Heart left ventricle (tissue), 16 donors: ENCODE measurements at regions of chr13 and their contacts with region 1.

Region 1: DNA sequence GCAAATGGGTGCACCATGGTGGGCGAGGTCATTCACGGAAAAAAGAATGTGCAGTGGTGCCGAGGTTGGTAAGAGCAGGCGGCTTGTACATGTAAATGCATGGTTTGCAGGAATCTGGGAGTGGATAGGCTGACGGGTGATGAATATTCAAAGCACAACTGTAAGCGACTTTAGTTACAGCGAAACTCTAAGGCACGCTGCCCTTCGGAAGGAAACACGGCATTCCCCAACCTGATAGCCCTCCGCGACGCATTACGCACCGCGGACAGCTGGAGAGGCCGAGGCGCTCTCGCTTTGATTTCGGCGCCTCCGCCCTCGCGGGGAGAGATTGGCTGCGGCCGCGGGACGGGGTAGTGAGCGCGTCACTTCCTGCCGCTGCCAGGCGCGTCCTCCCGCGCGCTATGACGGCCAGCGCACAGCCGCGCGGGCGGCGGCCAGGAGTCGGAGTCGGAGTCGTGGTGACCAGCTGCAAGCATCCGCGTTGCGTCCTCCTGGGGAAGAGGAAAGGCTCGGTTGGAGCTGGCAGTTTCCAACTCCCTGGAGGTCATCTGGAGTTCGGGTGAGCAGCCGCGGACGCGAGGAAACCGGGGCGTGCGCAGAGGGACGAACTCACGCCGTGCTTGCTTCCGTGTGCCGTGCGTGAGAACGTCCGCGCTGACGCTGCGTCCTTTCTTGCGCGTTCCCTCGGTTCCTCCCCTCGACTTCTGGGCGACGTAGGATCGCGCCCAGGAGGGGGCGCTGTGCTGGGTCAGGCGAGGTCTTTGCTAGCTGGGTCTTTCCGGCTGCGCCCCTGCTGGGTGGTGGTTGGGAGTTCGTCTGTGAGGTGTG is at the start of gene NUDT15:
- DNase-seq: peak; percentile 93 to 96 (median 94)
- ATAC-seq: peak; percentile 97 to 99 (median 99)
- H3K4me3 ChIP-seq: peak within 1 kb of the TSS; percentile 43 to 85 (median 71)
- H3K27ac ChIP-seq: peak within 1 kb of the TSS; percentile 78 to 99 (median 96)
- H3K4me1 ChIP-seq: peaks cover 2 to 22% (median 12%) of the 10 kb centered on the region in 12 donors
- H3K27me3 ChIP-seq: no peaks in the 10 kb centered on the region
- CTCF ChIP-seq: peak; percentile 91 to 100 (median 96)
- POLR2A ChIP-seq: peak; percentile 7 to 79
- total RNA-seq, gene NUDT15: 6.8 to 12.6 (median 10.4) TPM

Region 2: DNA sequence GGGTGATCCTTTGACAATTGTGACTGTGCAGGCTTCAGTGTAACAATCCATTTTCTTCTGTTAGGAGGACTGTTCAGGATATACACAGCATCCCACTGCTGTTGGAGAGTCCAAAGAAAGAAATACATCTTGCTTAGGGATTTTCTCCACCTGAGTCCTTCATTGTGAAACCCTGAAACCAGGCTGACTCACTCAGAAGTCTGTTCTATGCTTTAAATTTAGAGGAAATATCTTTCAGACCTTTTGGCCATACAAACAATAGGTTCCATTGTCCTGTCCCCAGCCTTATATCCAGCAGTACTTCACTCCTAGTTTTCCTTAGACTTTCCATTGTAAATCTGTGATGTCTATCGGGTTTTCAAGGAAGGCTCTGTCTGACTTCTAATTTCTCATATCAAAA is 415.6 kb before region 1 on chr13:
- intact Hi-C with region 1: no loop called
- DNase-seq: no peak
- ATAC-seq: no peak
- H3K4me3 ChIP-seq: no peak overlapping the region
- H3K27ac ChIP-seq: no peak overlapping the region
- H3K4me1 ChIP-seq: no peaks in the 10 kb centered on the region
- H3K27me3 ChIP-seq: no peaks in the 10 kb centered on the region
- CTCF ChIP-seq: no peak
- POLR2A ChIP-seq: no peak

Region 3: DNA sequence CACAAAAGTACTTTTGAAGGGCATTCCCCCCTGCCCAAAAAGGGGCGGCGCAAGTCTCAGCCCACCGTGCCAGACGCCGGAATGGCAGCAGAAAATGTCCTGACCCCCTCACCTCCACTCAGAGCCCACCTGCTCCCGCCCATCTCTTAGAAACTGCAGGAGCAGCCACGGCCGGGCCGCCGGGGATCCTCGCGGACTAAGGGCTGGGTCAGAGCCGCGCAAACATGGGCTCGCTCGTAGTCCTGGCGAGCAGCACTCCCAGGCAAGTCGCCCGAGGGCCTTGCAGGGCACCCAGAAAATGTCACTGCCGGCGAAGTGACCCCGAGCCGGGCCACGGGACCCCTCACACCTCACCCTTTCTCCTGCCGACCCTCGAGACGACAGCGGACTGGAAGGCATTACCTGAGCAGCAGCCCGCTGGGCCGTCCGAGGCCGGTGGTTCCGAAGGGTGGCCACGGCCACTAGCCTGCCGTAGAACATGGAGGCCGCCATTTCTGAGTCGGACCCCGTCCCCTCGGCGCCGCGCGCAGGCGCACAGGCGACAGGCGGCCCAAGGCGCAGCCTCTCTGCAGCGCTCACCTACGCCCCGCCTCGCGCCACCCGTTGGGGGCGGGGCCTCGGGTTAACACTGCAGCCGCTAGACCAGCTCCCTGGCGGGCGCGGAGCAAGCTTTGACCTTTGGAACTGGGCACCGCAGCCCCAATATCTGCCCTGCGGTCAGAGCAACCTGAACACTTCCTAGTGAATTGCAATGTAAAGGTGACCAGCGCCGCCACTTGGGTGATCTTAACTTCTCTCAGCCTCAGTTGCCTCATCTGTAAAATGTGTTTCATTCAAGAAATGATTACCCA is 36.6 kb before region 1 on chr13 and contains the start of gene SUCLA2:
- intact Hi-C with region 1: loop called in 1 of 10 experiments (anchors 5 kb)
- DNase-seq: peak; percentile 89 to 95 (median 93)
- ATAC-seq: peak; percentile 97 to 100 (median 100)
- H3K4me3 ChIP-seq: peak within 1 kb of the TSS; percentile 70 to 100 (median 89)
- H3K27ac ChIP-seq: peak within 1 kb of the TSS; percentile 22 to 91 (median 84)
- H3K4me1 ChIP-seq: peaks cover 0 to 46% (median 18%) of the 10 kb centered on the region in 12 donors
- H3K27me3 ChIP-seq: no peaks in the 10 kb centered on the region
- CTCF ChIP-seq: peak in 2 of 12 donors; percentile 7 to 18
- POLR2A ChIP-seq: peak in 1 of 2 donors; percentile 74
- total RNA-seq, gene SUCLA2: 83.8 to 166 (median 125) TPM

Region 4: DNA sequence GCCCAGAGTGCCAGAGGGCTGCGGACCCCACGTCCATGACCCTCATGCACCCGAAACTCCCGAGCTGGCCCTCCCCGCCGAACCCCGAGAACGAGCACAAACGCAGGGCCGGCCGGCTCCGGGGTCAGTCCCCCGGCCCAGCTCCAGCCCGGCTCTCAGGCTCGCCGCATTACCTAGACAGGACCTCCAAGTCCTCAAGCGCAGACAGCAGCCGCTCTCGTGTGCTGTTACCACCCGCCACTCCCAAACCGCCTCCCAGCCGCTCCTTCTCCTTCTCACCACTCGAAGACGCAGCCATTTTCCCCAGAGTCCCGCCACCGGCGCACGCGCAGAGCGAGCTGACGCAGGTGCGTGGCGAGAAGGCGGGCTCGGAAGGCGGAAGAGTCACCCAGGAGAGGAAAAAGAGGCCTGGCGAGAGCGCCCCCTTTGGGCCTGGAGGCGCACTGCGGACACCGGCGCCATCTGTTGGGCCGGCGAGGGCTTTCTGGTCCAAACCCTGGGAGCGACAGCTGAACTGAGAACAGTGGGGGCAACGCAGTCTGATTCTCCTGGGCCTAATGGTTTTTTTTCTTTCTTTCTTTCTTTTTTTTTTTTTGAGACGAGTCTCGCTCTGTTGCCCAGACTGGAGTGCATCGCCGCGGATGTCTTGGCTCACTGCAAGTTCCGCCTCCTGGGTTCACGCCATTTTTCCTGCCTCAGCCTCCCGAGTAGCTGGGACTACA is 57.4 kb after region 1 on chr13 and contains the start of gene MED4:
- intact Hi-C with region 1: loop called in 2 of 10 experiments (anchors 2 to 5 kb)
- DNase-seq: peak; percentile 95 to 98 (median 96)
- ATAC-seq: peak; percentile 94 to 99 (median 98)
- H3K4me3 ChIP-seq: peak within 1 kb of the TSS; percentile 65 to 99 (median 90)
- H3K27ac ChIP-seq: peak within 1 kb of the TSS; percentile 78 to 95 (median 88)
- H3K4me1 ChIP-seq: peaks cover 0 to 47% (median 34%) of the 10 kb centered on the region in 12 donors
- H3K27me3 ChIP-seq: no peaks in the 10 kb centered on the region
- CTCF ChIP-seq: peak; percentile 98 to 100 (median 99)
- POLR2A ChIP-seq: peak in 1 of 2 donors; percentile 77
- total RNA-seq, gene MED4: 24.9 to 50.3 (median 46.0) TPM

Region 5: GRCh38 chr13:48769107-48769704 is 731.6 kb after region 1 on chr13:
- intact Hi-C with region 1: loop called in 1 of 10 experiments (anchors 10 kb)
- DNase-seq: peak in 4 of 5 donors; percentile 71 to 86 (median 81)
- ATAC-seq: peak; percentile 57 to 96 (median 92)
- H3K4me3 ChIP-seq: no peak overlapping the region
- H3K27ac ChIP-seq: peak overlapping the region in 4 of 12 donors; percentile 27 to 44 (median 31)
- H3K4me1 ChIP-seq: peaks cover 0 to 14% (median 0%) of the 10 kb centered on the region in 12 donors
- H3K27me3 ChIP-seq: no peaks in the 10 kb centered on the region
- CTCF ChIP-seq: peak; percentile 94 to 100 (median 99)
- POLR2A ChIP-seq: no peak